ENCODE measurements at regions of chrX and their contacts with region 1.

Region 1: GRCh38 chrX:39859991-39860861 is 237.5 kb downstream of the BCOR start:
- DNase-seq: peak in 5 of 9 donors; percentile 16 to 74 (median 19)
- ATAC-seq: peak; percentile 40
- H3K4me3 ChIP-seq: no peak overlapping the region
- H3K4me3 Mint-ChIP-seq: peak overlapping the region in 6 of 10 donors; percentile 12 to 60 (median 48)
- H3K27ac ChIP-seq: no peak overlapping the region
- H3K27ac Mint-ChIP-seq: peak overlapping the region in 8 of 9 donors; percentile 37 to 89 (median 56)
- H3K4me1 ChIP-seq: peaks cover 17 to 19% of the 10 kb centered on the region in 2 donors
- H3K4me1 Mint-ChIP-seq: peaks cover 10 to 50% (median 26%) of the 10 kb centered on the region in 7 donors
- H3K27me3 ChIP-seq: no peaks in the 10 kb centered on the region
- H3K27me3 Mint-ChIP-seq: no peaks in the 10 kb centered on the region

Region 2: GRCh38 chrX:39766085-39766726 is 94.0 kb before region 1 on chrX:
- CTCF ChIA-PET with region 1: no interaction called
- POLR2A ChIA-PET with region 1: no interaction called
- intact Hi-C with region 1: loop called in 1 of 2 experiments (anchors 2 kb)
- DNase-seq: peak in 8 of 9 donors; percentile 32 to 70 (median 54)
- ATAC-seq: peak; percentile 92
- H3K4me3 ChIP-seq: peak overlapping the region; percentile 37
- H3K4me3 Mint-ChIP-seq: peak overlapping the region; percentile 6 to 78 (median 52)
- H3K27ac ChIP-seq: peak overlapping the region; percentile 71
- H3K27ac Mint-ChIP-seq: peak overlapping the region; percentile 87 to 97 (median 95)
- H3K4me1 ChIP-seq: peaks cover 16 to 17% of the 10 kb centered on the region in 2 donors
- H3K4me1 Mint-ChIP-seq: peaks cover 1 to 29% (median 24%) of the 10 kb centered on the region in 7 donors
- H3K27me3 ChIP-seq: no peaks in the 10 kb centered on the region
- H3K27me3 Mint-ChIP-seq: no peaks in the 10 kb centered on the region

Region 3: DNA sequence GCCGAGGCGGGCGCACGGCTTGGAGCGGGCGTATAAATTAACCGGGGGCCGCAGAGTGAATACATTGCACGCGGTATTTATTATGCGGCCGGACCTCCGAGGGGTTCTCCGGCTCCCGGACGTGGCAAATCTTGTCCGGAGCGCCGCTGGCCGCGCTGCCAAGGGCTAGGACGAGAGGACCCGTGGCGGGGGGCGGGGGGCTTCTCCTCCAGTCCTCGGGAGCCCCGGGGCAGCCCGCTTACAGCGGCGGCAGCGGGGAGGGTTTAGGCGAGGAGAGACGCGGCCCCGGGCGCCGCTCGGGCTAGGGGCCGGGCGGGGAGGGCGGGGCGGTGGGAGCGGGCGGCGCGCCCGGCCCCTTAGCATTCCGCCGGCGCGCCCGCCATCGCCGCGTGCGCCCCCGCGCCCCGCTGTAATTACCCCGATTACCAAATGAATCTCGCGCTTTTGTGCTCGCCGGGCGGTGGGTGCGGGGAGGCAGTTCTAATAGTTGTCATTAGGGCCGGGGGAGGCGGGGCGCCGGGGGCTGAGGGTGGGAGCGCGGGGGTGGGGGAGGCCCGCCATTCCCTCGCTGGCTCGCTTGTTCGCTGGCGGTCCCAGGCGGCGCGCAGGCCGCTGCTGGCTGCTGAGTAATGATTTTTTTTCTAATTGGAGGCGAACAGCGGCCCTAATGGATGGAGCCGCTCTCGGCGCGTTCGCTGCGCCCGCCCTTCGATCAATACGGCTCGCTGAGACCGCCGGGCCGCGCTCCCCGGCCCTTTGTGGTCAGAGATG is 39.1 kb before region 1 on chrX:
- CTCF ChIA-PET with region 1: no interaction called
- POLR2A ChIA-PET with region 1: interaction called, 4 read pairs
- intact Hi-C with region 1: loop called (anchors 1 to 5 kb)
- DNase-seq: peak in 1 of 9 donors; percentile 37
- ATAC-seq: no peak
- H3K4me3 ChIP-seq: no peak overlapping the region
- H3K4me3 Mint-ChIP-seq: peak overlapping the region; percentile 2 to 76 (median 55)
- H3K27ac ChIP-seq: no peak overlapping the region
- H3K27ac Mint-ChIP-seq: no peak overlapping the region
- H3K4me1 ChIP-seq: no peaks in the 10 kb centered on the region
- H3K4me1 Mint-ChIP-seq: peaks cover 0 to 29% (median 7%) of the 10 kb centered on the region in 7 donors
- H3K27me3 ChIP-seq: no peaks in the 10 kb centered on the region
- H3K27me3 Mint-ChIP-seq: no peaks in the 10 kb centered on the region

Region 4: DNA sequence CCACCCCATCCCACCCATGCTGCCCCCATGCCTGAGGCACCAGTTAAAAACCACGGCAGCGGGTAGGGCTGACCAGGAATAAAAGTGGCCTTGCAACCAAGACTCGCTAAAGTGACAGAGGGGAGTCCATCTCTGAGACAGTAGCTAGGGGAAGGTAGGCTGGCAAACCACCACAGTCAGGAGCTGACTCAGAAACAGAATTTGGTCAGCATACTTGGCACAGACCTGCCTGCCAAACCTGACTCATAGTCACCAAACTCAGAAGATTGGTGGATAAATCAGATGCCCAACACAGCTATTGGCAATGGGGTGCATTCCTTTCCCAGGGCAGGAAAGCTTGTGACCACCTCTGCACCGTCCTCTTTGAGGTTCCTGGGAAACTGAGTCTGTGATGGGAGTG is 43.7 kb after region 1 on chrX:
- CTCF ChIA-PET with region 1: no interaction called
- POLR2A ChIA-PET with region 1: no interaction called
- intact Hi-C with region 1: loop called in 1 of 2 experiments (anchors 2 kb)
- DNase-seq: no peak
- ATAC-seq: no peak
- H3K4me3 ChIP-seq: no peak overlapping the region
- H3K4me3 Mint-ChIP-seq: no peak overlapping the region
- H3K27ac ChIP-seq: no peak overlapping the region
- H3K27ac Mint-ChIP-seq: no peak overlapping the region
- H3K4me1 ChIP-seq: no peaks in the 10 kb centered on the region
- H3K4me1 Mint-ChIP-seq: peaks cover 0 to 8% (median 0%) of the 10 kb centered on the region in 7 donors
- H3K27me3 ChIP-seq: no peaks in the 10 kb centered on the region
- H3K27me3 Mint-ChIP-seq: peaks cover 0 to 4% (median 0%) of the 10 kb centered on the region in 5 donors

Region 5: GRCh38 chrX:40022421-40022820 is 162.2 kb after region 1 on chrX:
- CTCF ChIA-PET with region 1: no interaction called
- POLR2A ChIA-PET with region 1: no interaction called
- intact Hi-C with region 1: loop called in 1 of 2 experiments (anchors 1 kb)
- DNase-seq: no peak
- ATAC-seq: no peak
- H3K4me3 ChIP-seq: no peak overlapping the region
- H3K4me3 Mint-ChIP-seq: peak overlapping the region in 7 of 10 donors; percentile 11 to 65 (median 26)
- H3K27ac ChIP-seq: no peak overlapping the region
- H3K27ac Mint-ChIP-seq: peak overlapping the region in 1 of 9 donors; percentile 16
- H3K4me1 ChIP-seq: peaks cover 0 to 5% of the 10 kb centered on the region in 2 donors
- H3K4me1 Mint-ChIP-seq: peaks cover 0 to 28% (median 9%) of the 10 kb centered on the region in 7 donors
- H3K27me3 ChIP-seq: no peaks in the 10 kb centered on the region
- H3K27me3 Mint-ChIP-seq: no peaks in the 10 kb centered on the region

Region 6: DNA sequence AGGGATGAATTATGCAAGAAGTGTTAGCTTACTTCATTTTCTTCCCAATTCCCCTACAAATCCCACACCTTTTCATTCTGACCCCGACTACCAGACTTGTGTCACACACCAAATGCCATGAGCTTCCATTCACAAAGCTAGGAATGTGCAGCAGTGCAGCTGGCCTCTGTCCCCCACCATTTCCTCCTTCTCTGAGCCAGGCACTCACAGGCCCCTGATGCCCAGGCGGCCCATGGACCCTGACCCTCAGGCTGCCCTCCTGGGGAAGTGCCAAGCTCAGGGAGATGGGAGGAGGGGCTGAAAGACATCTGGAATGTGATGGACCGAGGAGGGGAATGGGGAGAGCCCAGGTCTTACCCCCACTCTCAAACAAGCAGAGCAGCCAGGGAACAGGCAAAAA is 304.5 kb after region 1 on chrX:
- CTCF ChIA-PET with region 1: no interaction called
- POLR2A ChIA-PET with region 1: no interaction called
- intact Hi-C with region 1: no loop called
- DNase-seq: no peak
- ATAC-seq: no peak
- H3K4me3 ChIP-seq: no peak overlapping the region
- H3K4me3 Mint-ChIP-seq: no peak overlapping the region
- H3K27ac ChIP-seq: no peak overlapping the region
- H3K27ac Mint-ChIP-seq: peak overlapping the region in 1 of 9 donors; percentile 38
- H3K4me1 ChIP-seq: peaks cover 0 to 14% of the 10 kb centered on the region in 2 donors
- H3K4me1 Mint-ChIP-seq: peaks cover 10 to 46% (median 20%) of the 10 kb centered on the region in 7 donors
- H3K27me3 ChIP-seq: no peaks in the 10 kb centered on the region
- H3K27me3 Mint-ChIP-seq: no peaks in the 10 kb centered on the region

Region 7: GRCh38 chrX:40175511-40176350 is 315.5 kb after region 1 on chrX:
- CTCF ChIA-PET with region 1: no interaction called
- POLR2A ChIA-PET with region 1: interaction called, 6 read pairs
- intact Hi-C with region 1: loop called (anchors 1 kb)
- DNase-seq: peak; percentile 60 to 91 (median 83)
- ATAC-seq: peak; percentile 58
- H3K4me3 ChIP-seq: peak overlapping the region; percentile 73
- H3K4me3 Mint-ChIP-seq: peak overlapping the region; percentile 89 to 93 (median 90)
- H3K27ac ChIP-seq: peak overlapping the region; percentile 98
- H3K27ac Mint-ChIP-seq: peak overlapping the region; percentile 96 to 100 (median 98)
- H3K4me1 ChIP-seq: peaks cover 13 to 18% of the 10 kb centered on the region in 2 donors
- H3K4me1 Mint-ChIP-seq: peaks cover 5 to 46% (median 36%) of the 10 kb centered on the region in 7 donors
- H3K27me3 ChIP-seq: no peaks in the 10 kb centered on the region
- H3K27me3 Mint-ChIP-seq: no peaks in the 10 kb centered on the region

Measured in naive thymus-derived CD4-positive, alpha-beta T cell (primary cell).